ENCODE measurements at regions of chr5 and their contacts with region 1.

Region 1: GRCh38 chr5:172714491-172715421 is 56.2 kb downstream of the DUSP1 start:
- DNase-seq: peak; percentile 84 to 92 (median 90)
- ATAC-seq: peak; percentile 76 to 80
- H3K4me3 ChIP-seq: no peak overlapping the region
- H3K27ac ChIP-seq: peak overlapping the region; percentile 89
- H3K4me1 ChIP-seq: peaks cover 7% of the 10 kb centered on the region
- H3K27me3 ChIP-seq: no peaks in the 10 kb centered on the region

Region 2: DNA sequence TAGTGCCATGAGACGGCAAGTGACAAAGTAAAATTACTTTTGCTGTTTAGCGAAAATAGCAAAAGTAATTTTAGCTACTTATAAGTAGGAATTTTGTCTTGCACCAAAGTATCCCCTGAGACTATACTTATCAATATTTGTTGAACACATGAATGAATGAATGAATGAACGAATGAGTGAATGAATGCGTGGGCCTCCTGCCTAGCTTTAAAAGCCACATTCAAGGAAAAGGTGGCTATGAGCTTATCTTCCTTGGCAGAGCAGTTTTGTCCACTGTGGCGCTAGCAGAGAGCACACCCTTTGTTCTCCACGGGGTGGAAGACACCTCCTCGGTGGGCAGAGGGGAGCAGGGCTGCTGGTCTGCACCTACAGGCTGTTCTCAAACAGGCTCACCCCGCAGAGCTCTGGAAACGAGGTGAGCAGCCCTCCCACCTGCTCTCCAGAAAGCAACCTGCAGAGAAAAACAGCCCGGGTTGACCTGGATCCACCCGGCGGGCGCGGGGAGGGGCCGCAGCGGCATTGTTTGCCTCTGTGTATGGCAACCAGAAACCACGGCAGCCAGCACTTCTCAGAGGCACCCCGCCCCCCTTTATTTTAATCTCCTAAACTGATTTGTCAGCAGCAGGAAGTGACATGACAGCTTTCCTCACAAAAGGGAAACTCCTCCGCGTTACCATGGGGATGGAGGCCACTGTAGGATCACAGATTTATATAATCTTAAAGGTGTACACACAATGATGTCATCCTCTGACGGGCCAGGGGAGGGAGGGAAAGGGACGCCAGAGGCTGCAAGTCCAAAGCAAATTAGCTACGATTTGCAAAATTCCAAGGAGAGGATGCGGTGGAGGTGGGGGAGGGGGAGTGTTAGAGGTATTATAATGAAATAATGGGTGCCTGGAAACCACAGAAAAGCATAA is 50.4 kb after region 1 on chr5:
- intact Hi-C with region 1: loop called (anchors 2 to 5 kb)
- DNase-seq: peak; percentile 92 to 95 (median 95)
- ATAC-seq: peak; percentile 76 to 78
- H3K4me3 ChIP-seq: peak overlapping the region; percentile 79
- H3K27ac ChIP-seq: peak overlapping the region; percentile 100
- H3K4me1 ChIP-seq: peaks cover 2% of the 10 kb centered on the region
- H3K27me3 ChIP-seq: no peaks in the 10 kb centered on the region

Region 3: DNA sequence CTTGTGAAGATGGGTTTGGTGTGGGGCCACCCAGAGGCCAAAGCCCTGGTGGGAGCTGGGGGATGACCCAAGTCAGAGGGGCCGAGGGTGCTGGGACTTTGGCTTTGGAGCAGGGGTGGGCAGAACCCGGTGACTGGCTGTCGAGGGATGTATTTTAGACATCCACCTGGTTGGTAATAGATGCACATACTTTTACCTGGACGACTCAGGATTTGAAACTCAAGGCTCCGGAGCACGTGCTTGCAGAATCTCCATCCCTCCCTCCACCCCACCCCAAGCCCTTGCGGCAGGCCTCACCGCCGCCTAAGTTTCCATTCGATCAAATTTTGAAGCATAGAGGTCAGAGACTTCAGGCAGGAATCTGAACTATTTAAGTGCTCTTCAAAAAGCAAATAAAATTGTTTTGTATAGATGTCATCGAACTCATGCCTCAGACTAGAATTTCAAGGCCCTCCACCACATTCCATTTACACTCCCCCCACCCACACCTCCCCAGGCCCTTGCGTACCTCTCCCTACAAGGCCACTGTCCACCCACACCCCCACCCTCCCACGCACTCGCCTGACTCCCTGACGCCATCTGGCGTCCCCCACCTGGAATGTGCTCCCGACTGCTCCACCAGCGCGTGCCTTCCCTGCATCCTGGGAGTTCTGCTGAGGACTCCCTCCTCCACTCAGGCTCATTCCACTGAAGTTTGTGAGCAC is 187.9 kb after region 1 on chr5:
- intact Hi-C with region 1: loop called in 1 of 4 experiments (anchors 10 kb)
- DNase-seq: peak; percentile 76 to 92 (median 90)
- ATAC-seq: peak; percentile 54 to 66
- H3K4me3 ChIP-seq: no peak overlapping the region
- H3K27ac ChIP-seq: peak overlapping the region; percentile 57
- H3K4me1 ChIP-seq: peaks cover 20% of the 10 kb centered on the region
- H3K27me3 ChIP-seq: no peaks in the 10 kb centered on the region

Region 4: DNA sequence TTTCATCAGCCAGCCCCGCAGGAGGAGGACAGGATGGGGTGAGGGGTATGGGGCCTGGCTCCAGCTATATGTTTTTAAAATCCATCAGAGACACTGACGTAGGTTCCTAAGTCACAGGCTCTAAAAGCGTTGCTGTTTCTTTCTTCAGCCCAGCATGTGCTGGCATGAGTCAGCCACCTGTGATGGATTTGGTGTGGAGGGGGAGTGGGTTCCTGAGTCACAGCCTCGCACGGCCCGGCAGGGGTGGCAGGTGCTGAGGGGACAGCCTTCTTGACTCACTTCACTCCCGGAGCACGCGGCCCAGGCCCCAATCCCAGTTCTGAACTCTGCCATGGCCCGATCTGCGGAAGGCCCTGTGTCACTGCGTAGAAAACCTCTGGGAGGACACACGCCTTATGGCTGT is 205.7 kb after region 1 on chr5:
- intact Hi-C with region 1: no loop called
- DNase-seq: peak in 1 of 3 donors; percentile 28
- ATAC-seq: peak in 1 of 2 donors; percentile 22
- H3K4me3 ChIP-seq: no peak overlapping the region
- H3K27ac ChIP-seq: no peak overlapping the region
- H3K4me1 ChIP-seq: no peaks in the 10 kb centered on the region
- H3K27me3 ChIP-seq: no peaks in the 10 kb centered on the region

Region 5: GRCh38 chr5:172932313-172933017 is 217.7 kb after region 1 on chr5:
- intact Hi-C with region 1: loop called (anchors 1 to 5 kb)
- DNase-seq: peak; percentile 73 to 90 (median 88)
- ATAC-seq: peak; percentile 78 to 80
- H3K4me3 ChIP-seq: no peak overlapping the region
- H3K27ac ChIP-seq: peak overlapping the region; percentile 31
- H3K4me1 ChIP-seq: peaks cover 5% of the 10 kb centered on the region
- H3K27me3 ChIP-seq: no peaks in the 10 kb centered on the region

Measured in right cardiac atrium (tissue), 5 donors.